Upper lobe of right lung (tissue), 1 donor: ENCODE measurements at regions of chr1 and their contacts with region 1.

Region 1: GRCh38 chr1:176843352-176844297 is 320.9 kb downstream of the ASTN1 start:
- DNase-seq: no peak
- ATAC-seq: peak; percentile 68
- H3K4me3 ChIP-seq: no peak overlapping the region
- H3K27ac ChIP-seq: no peak overlapping the region
- H3K4me1 ChIP-seq: no peaks in the 10 kb centered on the region
- H3K27me3 ChIP-seq: no peaks in the 10 kb centered on the region
- CTCF ChIP-seq: peak; percentile 51

Region 2: DNA sequence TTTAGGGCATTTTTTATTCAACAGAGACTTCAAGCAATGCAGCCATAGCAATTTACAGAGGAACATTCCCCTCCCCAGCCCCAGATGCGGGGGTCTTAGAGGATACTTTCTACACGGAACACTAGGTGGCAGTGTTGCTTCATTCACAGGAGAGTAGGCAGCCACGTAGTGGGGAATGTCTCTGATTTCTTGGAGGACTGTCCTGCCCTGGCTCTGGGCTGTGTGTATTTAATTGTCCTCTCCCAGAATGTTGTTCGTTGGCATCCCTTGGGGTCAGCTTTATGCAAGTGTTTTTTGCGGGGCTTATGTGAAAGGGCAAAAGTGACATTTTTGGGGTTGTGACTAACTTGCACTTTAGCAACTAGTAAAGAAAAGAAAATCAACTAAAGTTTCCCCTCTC is 283.7 kb before region 1 on chr1:
- intact Hi-C with region 1: loop called (anchors 10 kb)
- DNase-seq: no peak
- ATAC-seq: peak; percentile 89
- H3K4me3 ChIP-seq: no peak overlapping the region
- H3K27ac ChIP-seq: no peak overlapping the region
- H3K4me1 ChIP-seq: no peaks in the 10 kb centered on the region
- H3K27me3 ChIP-seq: no peaks in the 10 kb centered on the region
- CTCF ChIP-seq: peak; percentile 82

Region 3: GRCh38 chr1:176733661-176734060 is 110.0 kb before region 1 on chr1:
- intact Hi-C with region 1: no loop called
- DNase-seq: no peak
- ATAC-seq: no peak
- H3K4me3 ChIP-seq: no peak overlapping the region
- H3K27ac ChIP-seq: no peak overlapping the region
- H3K4me1 ChIP-seq: no peaks in the 10 kb centered on the region
- H3K27me3 ChIP-seq: no peaks in the 10 kb centered on the region
- CTCF ChIP-seq: no peak

Region 4: GRCh38 chr1:177256153-177257075 is 412.8 kb after region 1 on chr1:
- intact Hi-C with region 1: no loop called
- DNase-seq: peak; percentile 82
- ATAC-seq: peak; percentile 95
- H3K4me3 ChIP-seq: no peak overlapping the region
- H3K27ac ChIP-seq: no peak overlapping the region
- H3K4me1 ChIP-seq: peaks cover 11% of the 10 kb centered on the region
- H3K27me3 ChIP-seq: no peaks in the 10 kb centered on the region
- CTCF ChIP-seq: peak; percentile 69